Activated CD8-positive, alpha-beta T cell treated with anti-CD3 and anti-CD28 coated beads for 36 hours (primary cell): ENCODE measurements at regions of chr15 and their contacts with region 1.

Region 1: GRCh38 chr15:72796515-72797337 is 13.2 kb upstream of the ADPGK start:
- DNase-seq: peak; percentile 33
- ATAC-seq: peak; percentile 84
- H3K4me3 Mint-ChIP-seq: peak overlapping the region; percentile 72
- H3K27ac Mint-ChIP-seq: no peak overlapping the region
- H3K4me1 Mint-ChIP-seq: peaks cover 9% of the 10 kb centered on the region
- H3K27me3 Mint-ChIP-seq: peaks cover 39% of the 10 kb centered on the region
- CTCF ChIP-seq: peak; percentile 65

Region 2: GRCh38 chr15:72783563-72784237 is 13.0 kb before region 1 on chr15 and contains the start of gene ADPGK:
- CTCF ChIA-PET with region 1: interaction called, 13 read pairs
- POLR2A ChIA-PET with region 1: interaction called, 4 read pairs
- intact Hi-C with region 1: no loop called
- DNase-seq: peak; percentile 90
- ATAC-seq: peak; percentile 84
- H3K4me3 Mint-ChIP-seq: peak within 1 kb of the TSS; percentile 98
- H3K27ac Mint-ChIP-seq: peak within 1 kb of the TSS; percentile 100
- H3K4me1 Mint-ChIP-seq: peaks cover 47% of the 10 kb centered on the region
- H3K27me3 Mint-ChIP-seq: no peaks in the 10 kb centered on the region
- CTCF ChIP-seq: no peak
- total RNA-seq, gene ADPGK: 63.7 to 65.1 TPM

Region 3: DNA sequence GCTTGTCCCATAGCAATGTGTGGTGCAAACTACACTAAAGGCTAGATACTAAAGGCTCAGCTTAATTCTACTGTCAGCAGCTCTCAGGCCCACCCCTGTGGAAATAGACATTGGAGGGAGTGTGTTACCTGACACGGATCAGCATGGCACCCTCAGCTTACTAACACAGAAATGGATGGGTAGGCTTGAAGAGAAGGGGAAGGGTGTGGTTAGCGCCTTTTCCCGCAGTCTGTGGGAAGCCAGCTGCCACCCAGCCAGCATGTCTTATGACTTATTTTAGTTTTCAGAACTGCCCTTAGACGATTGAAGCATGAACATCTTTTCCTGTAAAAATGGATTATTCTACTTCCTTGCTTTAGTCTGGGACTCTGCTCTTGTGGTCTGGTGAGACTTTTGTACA is 12.6 kb after region 1 on chr15:
- CTCF ChIA-PET with region 1: no interaction called
- POLR2A ChIA-PET with region 1: no interaction called
- intact Hi-C with region 1: no loop called
- DNase-seq: no peak
- ATAC-seq: no peak
- H3K4me3 Mint-ChIP-seq: no peak overlapping the region
- H3K27ac Mint-ChIP-seq: no peak overlapping the region
- H3K4me1 Mint-ChIP-seq: peaks cover 6% of the 10 kb centered on the region
- H3K27me3 Mint-ChIP-seq: peaks cover 6% of the 10 kb centered on the region
- CTCF ChIP-seq: no peak

Region 4: DNA sequence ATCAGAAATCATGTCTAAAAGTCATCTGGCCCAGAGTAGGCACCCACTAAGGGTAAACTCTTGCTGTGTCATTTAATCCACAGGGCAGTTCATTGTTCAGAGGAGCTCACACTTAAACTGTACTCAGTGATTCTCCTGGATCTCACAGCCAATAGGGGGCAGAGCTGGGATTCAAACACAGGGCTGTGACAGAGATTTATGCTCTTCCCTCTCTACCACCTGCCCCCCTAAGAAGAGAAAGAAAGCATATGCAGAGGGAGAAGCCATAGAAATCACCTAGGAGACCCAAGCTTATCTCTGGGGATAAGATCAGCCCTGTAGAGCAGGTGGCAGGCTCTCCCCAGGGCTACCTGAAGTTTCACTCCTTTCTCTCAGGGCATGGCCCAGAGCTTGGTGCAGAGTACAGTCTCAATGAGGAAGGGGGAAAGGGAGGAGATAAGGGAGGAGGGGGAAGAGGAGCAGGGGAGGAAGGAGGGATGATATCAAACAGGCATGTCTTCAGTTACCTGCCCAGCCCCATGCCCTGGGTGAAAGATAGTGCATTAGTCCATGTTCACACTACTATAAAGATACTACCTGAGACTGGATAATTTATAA is 38.7 kb after region 1 on chr15:
- CTCF ChIA-PET with region 1: no interaction called
- POLR2A ChIA-PET with region 1: no interaction called
- intact Hi-C with region 1: no loop called
- DNase-seq: peak; percentile 7
- ATAC-seq: no peak
- H3K4me3 Mint-ChIP-seq: no peak overlapping the region
- H3K27ac Mint-ChIP-seq: no peak overlapping the region
- H3K4me1 Mint-ChIP-seq: no peaks in the 10 kb centered on the region
- H3K27me3 Mint-ChIP-seq: peaks cover 5% of the 10 kb centered on the region
- CTCF ChIP-seq: no peak

Region 5: GRCh38 chr15:73081321-73081958 is 284.7 kb after region 1 on chr15:
- CTCF ChIA-PET with region 1: interaction called, 5 read pairs
- POLR2A ChIA-PET with region 1: no interaction called
- intact Hi-C with region 1: loop called (anchors 5 kb)
- DNase-seq: peak; percentile 8
- ATAC-seq: no peak
- H3K4me3 Mint-ChIP-seq: no peak overlapping the region
- H3K27ac Mint-ChIP-seq: no peak overlapping the region
- H3K4me1 Mint-ChIP-seq: no peaks in the 10 kb centered on the region
- H3K27me3 Mint-ChIP-seq: peaks cover 3% of the 10 kb centered on the region
- CTCF ChIP-seq: peak; percentile 70